ENCODE measurements at regions of chr7 and their contacts with region 1.

Region 1: DNA sequence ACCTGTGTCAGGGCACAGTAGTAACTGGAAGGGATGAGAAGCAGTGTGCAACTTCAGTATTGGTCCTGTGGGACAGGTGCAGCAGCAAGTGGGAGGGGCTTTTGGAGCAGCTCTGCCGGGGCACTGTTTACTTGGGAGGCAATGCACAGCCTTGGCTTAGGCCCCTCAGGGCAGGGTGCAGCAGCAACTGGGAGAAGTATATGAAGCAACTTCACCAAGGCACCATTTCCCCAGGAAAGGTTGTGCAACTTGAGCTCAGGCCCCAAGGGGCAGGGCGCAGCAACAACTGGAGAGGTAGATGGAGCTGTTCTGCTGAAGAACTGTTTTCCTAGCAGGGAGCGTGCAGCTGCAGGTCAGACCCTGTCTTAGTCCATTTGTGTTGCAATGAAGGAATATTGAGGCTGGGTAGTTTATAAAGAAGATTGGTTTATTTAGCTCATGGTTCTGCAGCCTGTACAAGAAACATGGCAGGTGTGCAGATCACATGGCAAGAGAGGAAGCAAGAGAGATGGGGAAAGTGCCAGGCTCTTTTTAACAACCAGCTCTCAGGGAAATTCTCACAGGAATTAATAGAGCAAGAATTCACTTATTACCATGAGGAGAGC is 10.7 kb downstream of the GPR141 start:
- DNase-seq: no peak
- ATAC-seq: no peak
- H3K4me3 ChIP-seq: no peak overlapping the region
- H3K27ac ChIP-seq: no peak overlapping the region; the same call in 1 of the 2 replicates
- H3K4me1 ChIP-seq: peaks cover 7% of the 10 kb centered on the region
- H3K27me3 ChIP-seq: no peaks in the 10 kb centered on the region
- CTCF ChIP-seq: no peak
- EP300 ChIP-seq: no peak
- POLR2A ChIP-seq: no peak
- RAD21 ChIP-seq: no peak

Region 2: DNA sequence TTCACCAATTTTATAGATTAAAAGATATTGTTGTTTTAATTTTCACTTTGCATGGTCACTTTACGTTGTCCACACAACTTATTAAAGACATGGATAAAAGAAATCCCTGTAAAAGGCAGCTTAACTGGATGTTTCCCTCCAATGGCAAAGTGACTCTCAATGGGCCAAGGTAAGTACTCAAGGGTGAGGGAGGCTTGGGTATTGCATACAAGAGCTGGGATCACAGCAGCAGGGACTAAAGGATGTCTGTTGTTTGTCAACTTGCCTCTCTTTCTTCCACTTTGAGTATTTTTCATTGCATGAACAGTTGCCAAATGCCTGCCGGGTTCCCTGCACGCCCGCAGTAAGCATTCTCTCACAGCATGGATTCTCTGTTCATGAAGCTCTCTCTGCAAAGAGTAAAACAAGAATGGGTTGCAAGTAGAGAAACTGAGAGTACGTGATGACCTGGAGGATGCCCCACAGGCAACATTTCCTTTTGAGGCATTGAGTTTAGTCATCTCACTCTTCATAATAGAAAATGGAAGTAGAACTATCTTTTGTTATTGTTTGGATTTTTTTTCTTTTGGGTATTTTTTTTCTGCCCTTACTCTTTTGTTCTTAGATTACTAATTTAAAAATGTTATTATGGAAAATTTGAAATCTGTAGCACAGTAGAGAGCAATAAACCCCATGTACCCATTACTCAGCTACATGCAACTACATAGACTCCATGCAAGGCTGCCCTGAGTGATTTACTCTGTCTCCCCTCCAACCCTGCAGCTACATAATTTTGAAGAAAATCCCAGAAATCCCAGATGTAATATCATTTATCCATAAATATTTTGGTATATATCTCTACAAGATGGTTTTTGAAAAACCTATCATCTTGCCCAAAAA is 15.6 kb after region 1 on chr7:
- CTCF ChIA-PET with region 1: interaction called, 17 read pairs
- POLR2A ChIA-PET with region 1: interaction called, 14 read pairs
- RAD21 ChIA-PET with region 1: interaction called, 13 read pairs
- SMC1A ChIA-PET with region 1: interaction called, 55 read pairs
- in situ Hi-C with region 1: no loop called
- intact Hi-C with region 1: no loop called
- DNase-seq: peak; percentile 75
- ATAC-seq: peak; percentile 99
- H3K4me3 ChIP-seq: peak overlapping the region; percentile 25; the same call in 1 of the 2 replicates
- H3K27ac ChIP-seq: peak overlapping the region; percentile 40; the same call in 1 of the 2 replicates
- H3K4me1 ChIP-seq: peaks cover 13% of the 10 kb centered on the region
- H3K27me3 ChIP-seq: no peaks in the 10 kb centered on the region
- CTCF ChIP-seq: no peak
- EP300 ChIP-seq: peak in 1 of 2 experiments; percentile 20; a peak in 1 of 4 replicates
- POLR2A ChIP-seq: no peak
- RAD21 ChIP-seq: no peak

Region 3: GRCh38 chr7:37719077-37719476 is 24.8 kb after region 1 on chr7:
- CTCF ChIA-PET with region 1: interaction called, 5 read pairs
- POLR2A ChIA-PET with region 1: interaction called, 4 read pairs
- RAD21 ChIA-PET with region 1: interaction called, 3 read pairs
- SMC1A ChIA-PET with region 1: interaction called, 12 read pairs
- in situ Hi-C with region 1: no loop called
- intact Hi-C with region 1: no loop called
- DNase-seq: no peak
- ATAC-seq: peak; percentile 95
- H3K4me3 ChIP-seq: no peak overlapping the region
- H3K27ac ChIP-seq: no peak overlapping the region
- H3K4me1 ChIP-seq: peaks cover 8% of the 10 kb centered on the region
- H3K27me3 ChIP-seq: no peaks in the 10 kb centered on the region
- CTCF ChIP-seq: no peak
- EP300 ChIP-seq: peak; percentile 21 to 59; a peak in 1 of 4 replicates
- POLR2A ChIP-seq: no peak
- RAD21 ChIP-seq: no peak

Measured in GM12878 (cell line).